Right ventricle myocardium inferior (tissue), 1 donor: ENCODE measurements at regions of chr1 and their contacts with region 1.

Region 1: GRCh38 chr1:20361806-20362640 is 71.3 kb downstream of the VWA5B1 start:
- DNase-seq: peak; percentile 69
- ATAC-seq: peak; percentile 18

Region 2: GRCh38 chr1:20212685-20213331 is 149.2 kb before region 1 on chr1:
- intact Hi-C with region 1: loop called (anchors 5 kb)
- DNase-seq: peak; percentile 80
- ATAC-seq: peak; percentile 73

Region 3: DNA sequence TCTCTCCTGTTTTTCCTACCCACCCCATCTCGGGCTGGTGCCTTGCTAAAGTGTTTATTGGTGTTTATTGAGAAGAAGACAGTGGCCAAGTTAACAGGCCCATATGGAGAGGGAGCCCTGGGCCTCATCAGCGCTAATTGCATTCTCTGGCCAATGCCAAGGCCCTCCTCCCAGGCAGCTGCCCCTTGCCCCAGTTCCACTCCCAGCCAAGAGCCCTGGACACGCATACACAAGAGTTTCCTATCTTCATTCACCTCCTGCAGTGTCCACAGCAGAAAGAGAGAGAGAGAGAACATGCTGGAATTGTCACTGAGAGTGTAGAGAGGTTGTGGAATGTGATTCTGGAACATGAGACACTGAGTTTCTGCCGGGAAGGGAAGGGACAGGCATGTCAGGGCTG is 96.8 kb before region 1 on chr1:
- intact Hi-C with region 1: loop called (anchors 5 kb)
- DNase-seq: no peak
- ATAC-seq: peak; percentile 93

Region 4: GRCh38 chr1:20281801-20282200 is 80.2 kb before region 1 on chr1:
- intact Hi-C with region 1: loop called (anchors 5 kb)
- DNase-seq: no peak
- ATAC-seq: no peak

Region 5: DNA sequence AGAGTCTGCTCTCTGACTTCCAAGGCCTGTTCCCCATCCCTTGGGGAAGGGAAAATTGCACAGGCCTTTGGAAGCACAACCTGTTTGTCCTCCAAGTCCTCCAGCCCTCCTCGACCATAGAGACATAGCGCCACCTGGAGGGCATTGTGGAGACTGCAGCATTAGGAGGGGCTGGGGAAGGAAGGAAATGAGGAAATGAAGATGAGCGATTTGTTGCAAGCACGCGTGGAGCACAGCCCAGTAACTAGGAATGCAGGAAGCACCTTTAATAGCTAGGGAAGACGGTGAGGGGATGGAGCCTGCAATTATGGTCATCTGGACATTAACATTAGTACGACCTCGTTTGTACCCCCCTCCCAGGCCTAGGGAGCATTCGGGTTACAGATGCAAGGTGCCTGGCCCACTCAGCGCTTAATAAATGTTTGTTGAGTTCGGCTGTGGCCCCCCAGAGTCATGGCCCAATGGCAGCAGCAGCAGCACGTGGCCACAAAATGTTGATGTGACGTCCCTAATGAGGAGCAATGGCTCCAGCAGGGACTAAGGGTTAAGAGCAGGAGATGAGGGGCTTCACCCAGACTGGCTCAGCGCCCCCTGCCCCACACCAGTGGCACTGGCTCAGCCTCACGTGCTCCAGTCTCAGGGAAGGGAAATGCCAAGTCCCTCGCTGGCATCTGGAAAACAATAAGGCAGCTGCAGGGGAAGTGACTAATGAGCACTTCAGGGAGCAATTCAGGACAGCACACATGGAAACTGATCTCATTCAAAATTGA is 132.0 kb after region 1 on chr1:
- intact Hi-C with region 1: loop called (anchors 2 kb)
- DNase-seq: peak; percentile 90
- ATAC-seq: peak; percentile 94